ENCODE measurements at regions of chr19 and their contacts with region 1.

Region 1: GRCh38 chr19:55301459-55302317 is 17.9 kb downstream of the BRSK1 start:
- DNase-seq: peak; percentile 87 to 90 (median 88)
- H3K4me3 ChIP-seq: peak overlapping the region; percentile 34 to 49
- H3K4me3 Mint-ChIP-seq: peak overlapping the region; percentile 75 to 86 (median 80)
- H3K27ac ChIP-seq: peak overlapping the region; percentile 22
- H3K27ac Mint-ChIP-seq: peak overlapping the region; percentile 57 to 94 (median 82)
- H3K4me1 ChIP-seq: peaks cover 11% of the 10 kb centered on the region
- H3K4me1 Mint-ChIP-seq: peaks cover 6 to 21% (median 10%) of the 10 kb centered on the region in 4 donors
- H3K27me3 ChIP-seq: no peaks in the 10 kb centered on the region
- H3K27me3 Mint-ChIP-seq: no peaks in the 10 kb centered on the region

Region 2: GRCh38 chr19:55279770-55280643 is 21.7 kb before region 1 on chr19 and contains the start of gene HSPBP1:
- CTCF ChIA-PET with region 1: interaction called, 4 read pairs
- POLR2A ChIA-PET with region 1: interaction called, 10 read pairs
- intact Hi-C with region 1: no loop called
- DNase-seq: peak; percentile 96 to 97 (median 97)
- H3K4me3 ChIP-seq: peak within 1 kb of the TSS; percentile 95 to 98
- H3K4me3 Mint-ChIP-seq: peak within 1 kb of the TSS; percentile 92 to 100 (median 98)
- H3K27ac ChIP-seq: peak within 1 kb of the TSS; percentile 69
- H3K27ac Mint-ChIP-seq: peak within 1 kb of the TSS; percentile 87 to 100 (median 100)
- H3K4me1 ChIP-seq: peaks cover 39% of the 10 kb centered on the region
- H3K4me1 Mint-ChIP-seq: peaks cover 24 to 55% (median 34%) of the 10 kb centered on the region in 4 donors
- H3K27me3 ChIP-seq: no peaks in the 10 kb centered on the region
- H3K27me3 Mint-ChIP-seq: no peaks in the 10 kb centered on the region
- total RNA-seq, gene HSPBP1: 17.9 to 18.5 TPM

Region 3: GRCh38 chr19:55358943-55359633 is 57.4 kb after region 1 on chr19:
- CTCF ChIA-PET with region 1: no interaction called
- POLR2A ChIA-PET with region 1: no interaction called
- intact Hi-C with region 1: no loop called
- DNase-seq: no peak
- H3K4me3 ChIP-seq: no peak overlapping the region
- H3K4me3 Mint-ChIP-seq: no peak overlapping the region
- H3K27ac ChIP-seq: no peak overlapping the region
- H3K27ac Mint-ChIP-seq: no peak overlapping the region
- H3K4me1 ChIP-seq: peaks cover 7% of the 10 kb centered on the region
- H3K4me1 Mint-ChIP-seq: peaks cover 0 to 3% (median 0%) of the 10 kb centered on the region in 4 donors
- H3K27me3 ChIP-seq: peaks cover 3% of the 10 kb centered on the region
- H3K27me3 Mint-ChIP-seq: peaks cover 6 to 13% of the 10 kb centered on the region in 2 donors

Region 4: GRCh38 chr19:55385740-55386529 is 84.2 kb after region 1 on chr19 and contains the start of gene RPL28:
- CTCF ChIA-PET with region 1: interaction called, 31 read pairs
- POLR2A ChIA-PET with region 1: interaction called, 29 read pairs
- intact Hi-C with region 1: loop called (anchors 1 kb)
- DNase-seq: peak; percentile 98 to 100 (median 99)
- H3K4me3 ChIP-seq: peak within 1 kb of the TSS; percentile 85 to 88
- H3K4me3 Mint-ChIP-seq: peak within 1 kb of the TSS; percentile 99 to 100 (median 100)
- H3K27ac ChIP-seq: peak within 1 kb of the TSS; percentile 94
- H3K27ac Mint-ChIP-seq: peak within 1 kb of the TSS; percentile 98 to 100 (median 99)
- H3K4me1 ChIP-seq: peaks cover 68% of the 10 kb centered on the region
- H3K4me1 Mint-ChIP-seq: peaks cover 39 to 88% (median 63%) of the 10 kb centered on the region in 4 donors
- H3K27me3 ChIP-seq: no peaks in the 10 kb centered on the region
- H3K27me3 Mint-ChIP-seq: no peaks in the 10 kb centered on the region
- total RNA-seq, gene RPL28: 3,136 to 3,159 TPM

Region 5: GRCh38 chr19:55418185-55418584 is 116.5 kb after region 1 on chr19:
- CTCF ChIA-PET with region 1: interaction called, 21 read pairs
- POLR2A ChIA-PET with region 1: no interaction called
- intact Hi-C with region 1: loop called (anchors 1 kb)
- DNase-seq: peak; percentile 54 to 61 (median 60)
- H3K4me3 ChIP-seq: no peak overlapping the region
- H3K4me3 Mint-ChIP-seq: no peak overlapping the region
- H3K27ac ChIP-seq: no peak overlapping the region
- H3K27ac Mint-ChIP-seq: peak overlapping the region in 3 of 7 donors; percentile 48 to 74 (median 68)
- H3K4me1 ChIP-seq: peaks cover 25% of the 10 kb centered on the region
- H3K4me1 Mint-ChIP-seq: peaks cover 9 to 29% (median 20%) of the 10 kb centered on the region in 4 donors
- H3K27me3 ChIP-seq: no peaks in the 10 kb centered on the region
- H3K27me3 Mint-ChIP-seq: peaks cover 0 to 3% of the 10 kb centered on the region in 2 donors

Measured in CD4-positive, alpha-beta memory T cell (primary cell).